GM13976 (cell line): ENCODE measurements at regions of chr12 and their contacts with region 1.

Region 1: GRCh38 chr12:575948-576612 is 87.2 kb downstream of the NINJ2 start:
- DNase-seq: peak; percentile 94
- CTCF ChIP-seq: peak; percentile 96

Region 2: DNA sequence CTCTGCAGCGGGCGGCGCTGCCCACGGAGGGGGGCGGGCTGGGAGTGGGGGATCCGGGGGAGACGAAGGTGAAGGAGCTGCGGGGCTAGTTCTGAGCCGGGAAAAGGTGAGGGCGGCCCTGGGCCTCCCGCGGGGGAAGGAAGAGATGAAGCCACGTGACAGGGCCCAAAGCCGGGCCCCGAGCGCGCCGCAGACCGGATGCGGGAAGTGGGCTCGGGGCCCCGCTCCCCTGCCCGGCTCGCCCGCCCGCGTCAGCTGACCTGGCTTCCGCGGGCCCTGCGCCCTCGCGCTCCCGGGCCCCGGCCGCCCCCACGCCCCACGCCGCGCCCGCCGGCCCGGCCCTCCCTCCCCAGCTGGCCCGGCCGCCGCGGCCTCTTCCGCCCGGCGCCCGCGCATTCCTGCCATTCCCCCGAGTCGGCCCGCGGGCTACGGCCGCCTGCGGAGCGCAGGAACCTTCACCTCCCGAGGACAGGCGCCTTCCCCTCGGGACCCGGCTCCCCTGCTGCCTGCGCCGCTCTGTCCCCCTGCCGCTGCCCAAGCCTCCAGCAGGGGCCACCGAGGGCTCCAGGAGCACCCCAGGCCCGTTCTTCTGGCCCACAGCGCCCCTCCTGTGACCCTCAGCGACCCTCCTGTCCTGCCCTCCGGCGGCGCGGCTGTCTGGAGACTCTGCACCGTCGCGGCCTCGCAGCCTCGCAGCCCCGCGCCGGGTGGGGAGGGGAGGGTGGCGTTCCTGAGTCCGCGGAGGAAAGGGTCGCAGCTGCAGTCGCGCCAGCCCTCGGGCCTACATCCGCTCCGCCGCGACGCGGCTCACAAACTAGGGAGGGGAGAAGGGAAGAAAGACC is 66.8 kb after region 1 on chr12:
- in situ Hi-C with region 1: no loop called
- DNase-seq: peak; percentile 90
- CTCF ChIP-seq: peak; percentile 32

Region 3: DNA sequence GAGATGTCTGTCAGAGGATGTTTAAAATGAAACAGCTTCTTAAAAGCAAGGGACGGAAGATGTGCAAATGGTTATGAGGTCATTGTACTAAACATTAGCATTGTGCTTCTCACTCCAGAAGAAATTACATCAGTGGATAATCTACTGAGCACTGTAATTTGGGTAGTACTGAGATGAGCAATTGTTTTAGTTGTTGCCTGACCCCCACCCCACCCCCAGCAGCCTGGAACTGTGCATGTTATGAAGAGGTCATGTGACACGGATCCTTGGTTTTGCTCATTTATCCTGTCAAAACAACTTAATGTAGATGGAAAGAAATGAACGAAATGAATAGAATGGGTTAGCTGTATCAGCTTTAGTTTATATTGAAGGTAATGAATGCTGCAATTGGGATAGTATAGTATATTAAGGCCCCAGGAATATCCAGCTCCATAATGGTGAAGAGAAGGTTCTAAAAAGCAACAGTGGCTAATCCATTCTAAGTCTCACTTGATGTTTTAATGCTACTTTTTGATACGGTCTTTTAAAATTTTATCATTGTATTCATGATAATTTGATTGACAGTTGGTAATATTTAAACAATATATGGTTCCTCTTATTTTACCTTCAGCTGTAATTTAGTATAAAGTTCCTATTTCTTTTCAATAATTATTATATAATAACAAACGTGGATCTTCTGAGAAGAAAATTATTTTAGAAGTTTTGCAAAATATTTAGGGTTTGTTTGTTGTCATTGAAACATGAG is 234.8 kb after region 1 on chr12:
- in situ Hi-C with region 1: loop called (anchors 10 kb)
- DNase-seq: peak; percentile 64
- CTCF ChIP-seq: no peak

Region 4: DNA sequence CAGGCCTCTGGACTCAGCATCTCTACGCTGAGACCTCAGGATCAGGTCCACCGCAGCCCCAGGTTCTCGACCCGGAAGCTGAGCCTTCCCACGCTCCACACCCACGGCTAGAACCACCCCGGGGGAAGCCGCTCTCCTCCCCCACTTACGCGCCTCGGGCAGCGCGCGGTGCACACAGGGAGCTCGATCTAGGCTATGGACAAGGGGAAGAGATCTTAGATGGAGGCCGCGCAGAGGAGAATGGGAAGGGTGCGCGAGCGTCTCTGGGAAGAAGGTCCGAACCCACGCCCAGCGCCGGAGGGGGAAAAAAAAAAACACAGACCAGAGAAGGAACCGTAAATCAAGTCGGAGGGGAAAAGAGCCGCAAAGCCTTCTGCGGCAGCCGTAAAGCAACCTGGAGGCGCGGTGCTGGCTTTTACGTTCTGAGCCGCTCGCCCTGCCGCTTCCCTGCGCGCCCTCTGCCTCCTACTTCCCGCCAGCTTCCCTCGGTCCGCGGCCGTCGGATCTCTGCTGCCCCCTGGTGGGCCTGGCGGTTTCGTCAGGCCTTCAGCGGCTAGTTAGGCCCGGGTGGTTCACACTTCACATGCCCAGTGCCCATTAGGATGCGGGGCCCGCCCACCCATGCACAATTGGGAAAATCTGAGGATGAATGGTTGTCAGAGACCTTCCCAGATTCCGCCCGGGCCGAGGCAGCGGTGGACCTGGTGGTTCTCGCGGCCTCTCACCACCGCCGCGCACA is 373.5 kb after region 1 on chr12 and contains the start of gene RAD52:
- in situ Hi-C with region 1: loop called (anchors 10 kb)
- DNase-seq: peak; percentile 92
- CTCF ChIP-seq: peak; percentile 97